ENCODE measurements at regions of chr7 and their contacts with region 1.

Region 1: GRCh38 chr7:116211006-116211912 is 920 bp downstream of the TES start:
- DNase-seq: peak; percentile 90
- H3K4me3 Mint-ChIP-seq: peak overlapping the region; percentile 95
- H3K27ac Mint-ChIP-seq: peak overlapping the region; percentile 98
- H3K4me1 Mint-ChIP-seq: peaks cover 19% of the 10 kb centered on the region
- H3K27me3 Mint-ChIP-seq: no peaks in the 10 kb centered on the region
- CTCF ChIP-seq: no peak

Region 2: DNA sequence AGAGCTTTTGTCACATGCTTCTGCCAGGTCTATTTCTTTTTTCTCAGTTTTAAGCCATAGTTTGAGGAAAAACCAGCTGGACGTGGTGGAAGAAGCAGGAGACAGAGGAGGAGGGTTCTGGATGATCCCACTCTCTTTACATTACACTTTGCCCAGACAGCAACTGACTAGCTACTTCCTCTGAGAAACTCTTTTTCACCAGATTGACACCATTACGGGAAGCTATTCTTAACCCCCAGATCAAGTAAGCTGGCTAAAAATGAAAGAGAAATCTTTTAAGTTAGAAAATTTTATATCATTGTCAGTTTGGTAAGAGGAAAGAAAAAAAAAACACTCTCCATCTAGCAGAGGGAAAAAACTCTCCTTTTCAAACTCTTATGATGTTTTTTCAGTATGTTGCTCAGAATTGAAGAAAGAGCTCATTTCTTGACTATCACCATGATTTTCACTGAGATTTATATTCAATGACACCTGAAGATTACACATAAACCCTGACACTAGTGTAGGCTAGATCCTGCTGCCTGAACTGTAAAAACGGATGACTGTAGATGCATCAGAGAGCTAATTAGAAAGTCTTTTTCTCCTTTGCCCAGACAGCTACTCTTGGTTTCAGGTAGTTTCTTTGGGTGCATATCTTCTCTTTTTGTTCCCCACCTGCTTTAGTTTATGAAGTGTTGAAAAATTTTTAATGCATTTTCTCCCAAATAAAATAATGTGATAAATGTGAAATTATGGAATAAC is 383.8 kb before region 1 on chr7:
- CTCF ChIA-PET with region 1: no interaction called
- POLR2A ChIA-PET with region 1: no interaction called
- intact Hi-C with region 1: no loop called
- DNase-seq: no peak
- H3K4me3 Mint-ChIP-seq: no peak overlapping the region
- H3K27ac Mint-ChIP-seq: no peak overlapping the region
- H3K4me1 Mint-ChIP-seq: no peaks in the 10 kb centered on the region
- H3K27me3 Mint-ChIP-seq: peaks cover 76% of the 10 kb centered on the region
- CTCF ChIP-seq: no peak

Region 3: GRCh38 chr7:116159711-116160110 is 51.5 kb before region 1 on chr7:
- CTCF ChIA-PET with region 1: no interaction called
- POLR2A ChIA-PET with region 1: no interaction called
- intact Hi-C with region 1: no loop called
- DNase-seq: no peak
- H3K4me3 Mint-ChIP-seq: no peak overlapping the region
- H3K27ac Mint-ChIP-seq: no peak overlapping the region
- H3K4me1 Mint-ChIP-seq: no peaks in the 10 kb centered on the region
- H3K27me3 Mint-ChIP-seq: peaks cover 44% of the 10 kb centered on the region
- CTCF ChIP-seq: no peak

Region 4: GRCh38 chr7:116180302-116180701 is 31.0 kb before region 1 on chr7:
- CTCF ChIA-PET with region 1: interaction called, 35 read pairs
- POLR2A ChIA-PET with region 1: interaction called, 92 read pairs
- intact Hi-C with region 1: loop called (anchors 1 kb)
- DNase-seq: peak; percentile 73
- H3K4me3 Mint-ChIP-seq: no peak overlapping the region
- H3K27ac Mint-ChIP-seq: no peak overlapping the region
- H3K4me1 Mint-ChIP-seq: peaks cover 16% of the 10 kb centered on the region
- H3K27me3 Mint-ChIP-seq: no peaks in the 10 kb centered on the region
- CTCF ChIP-seq: peak; percentile 80

Region 5: DNA sequence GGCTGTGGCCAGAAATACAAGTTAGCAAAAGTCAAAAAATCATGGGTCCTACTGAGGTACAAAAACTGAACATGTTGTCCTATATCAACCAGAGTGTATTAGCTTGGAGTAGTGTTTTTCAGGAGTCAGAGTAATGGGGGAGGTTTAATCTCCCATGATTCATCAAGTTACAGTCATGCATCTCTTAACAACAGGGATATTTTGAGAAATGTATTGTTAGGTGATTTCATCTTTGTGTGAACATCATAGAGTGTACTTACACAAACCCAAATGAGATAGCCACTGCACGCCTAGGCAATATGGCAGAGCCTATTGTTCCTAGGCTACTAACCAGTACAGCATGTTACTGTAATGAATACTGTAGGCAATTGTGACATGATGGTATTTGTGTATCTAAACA is 15.8 kb before region 1 on chr7:
- CTCF ChIA-PET with region 1: interaction called, 10 read pairs
- POLR2A ChIA-PET with region 1: interaction called, 69 read pairs
- intact Hi-C with region 1: no loop called
- DNase-seq: no peak
- H3K4me3 Mint-ChIP-seq: no peak overlapping the region
- H3K27ac Mint-ChIP-seq: no peak overlapping the region
- H3K4me1 Mint-ChIP-seq: peaks cover 6% of the 10 kb centered on the region
- H3K27me3 Mint-ChIP-seq: no peaks in the 10 kb centered on the region
- CTCF ChIP-seq: no peak

Region 6: DNA sequence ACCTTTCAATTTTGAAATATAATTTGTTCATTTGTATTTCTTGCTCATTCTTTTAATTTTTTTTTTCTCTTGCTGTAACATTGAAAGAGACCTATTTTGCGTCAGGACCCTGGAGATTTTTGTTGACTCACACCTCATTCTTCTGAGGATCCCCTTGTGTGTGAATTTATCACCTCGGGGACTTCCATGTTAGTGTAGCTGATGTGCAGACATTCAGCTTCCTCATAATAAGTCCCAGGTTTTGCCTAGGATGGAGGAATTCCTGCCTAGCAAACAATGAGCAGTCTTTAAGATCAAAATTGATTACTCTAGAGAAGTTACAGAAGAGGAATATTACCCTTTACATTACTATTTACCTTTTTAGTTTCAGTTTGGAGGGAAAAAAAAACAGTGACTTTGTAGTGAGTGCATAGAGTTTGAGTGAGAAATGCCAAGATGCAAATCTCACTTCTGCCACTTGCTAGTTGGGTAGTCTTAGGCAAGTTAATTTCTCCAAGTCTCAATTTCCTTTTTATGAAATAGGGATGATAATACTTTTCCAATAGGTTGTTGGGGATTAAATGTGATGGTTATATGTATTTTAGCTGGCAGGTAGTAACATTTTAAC is 13.3 kb after region 1 on chr7:
- CTCF ChIA-PET with region 1: interaction called, 9 read pairs
- POLR2A ChIA-PET with region 1: interaction called, 110 read pairs
- intact Hi-C with region 1: loop called (anchors 1 kb)
- DNase-seq: peak; percentile 29
- H3K4me3 Mint-ChIP-seq: peak overlapping the region; percentile 39
- H3K27ac Mint-ChIP-seq: peak overlapping the region; percentile 71
- H3K4me1 Mint-ChIP-seq: peaks cover 51% of the 10 kb centered on the region
- H3K27me3 Mint-ChIP-seq: no peaks in the 10 kb centered on the region
- CTCF ChIP-seq: no peak

Region 7: GRCh38 chr7:116242178-116242577 is 30.9 kb after region 1 on chr7:
- CTCF ChIA-PET with region 1: interaction called, 29 read pairs
- POLR2A ChIA-PET with region 1: interaction called, 25 read pairs
- intact Hi-C with region 1: no loop called
- DNase-seq: no peak
- H3K4me3 Mint-ChIP-seq: no peak overlapping the region
- H3K27ac Mint-ChIP-seq: no peak overlapping the region
- H3K4me1 Mint-ChIP-seq: peaks cover 23% of the 10 kb centered on the region
- H3K27me3 Mint-ChIP-seq: no peaks in the 10 kb centered on the region
- CTCF ChIP-seq: no peak

Region 8: DNA sequence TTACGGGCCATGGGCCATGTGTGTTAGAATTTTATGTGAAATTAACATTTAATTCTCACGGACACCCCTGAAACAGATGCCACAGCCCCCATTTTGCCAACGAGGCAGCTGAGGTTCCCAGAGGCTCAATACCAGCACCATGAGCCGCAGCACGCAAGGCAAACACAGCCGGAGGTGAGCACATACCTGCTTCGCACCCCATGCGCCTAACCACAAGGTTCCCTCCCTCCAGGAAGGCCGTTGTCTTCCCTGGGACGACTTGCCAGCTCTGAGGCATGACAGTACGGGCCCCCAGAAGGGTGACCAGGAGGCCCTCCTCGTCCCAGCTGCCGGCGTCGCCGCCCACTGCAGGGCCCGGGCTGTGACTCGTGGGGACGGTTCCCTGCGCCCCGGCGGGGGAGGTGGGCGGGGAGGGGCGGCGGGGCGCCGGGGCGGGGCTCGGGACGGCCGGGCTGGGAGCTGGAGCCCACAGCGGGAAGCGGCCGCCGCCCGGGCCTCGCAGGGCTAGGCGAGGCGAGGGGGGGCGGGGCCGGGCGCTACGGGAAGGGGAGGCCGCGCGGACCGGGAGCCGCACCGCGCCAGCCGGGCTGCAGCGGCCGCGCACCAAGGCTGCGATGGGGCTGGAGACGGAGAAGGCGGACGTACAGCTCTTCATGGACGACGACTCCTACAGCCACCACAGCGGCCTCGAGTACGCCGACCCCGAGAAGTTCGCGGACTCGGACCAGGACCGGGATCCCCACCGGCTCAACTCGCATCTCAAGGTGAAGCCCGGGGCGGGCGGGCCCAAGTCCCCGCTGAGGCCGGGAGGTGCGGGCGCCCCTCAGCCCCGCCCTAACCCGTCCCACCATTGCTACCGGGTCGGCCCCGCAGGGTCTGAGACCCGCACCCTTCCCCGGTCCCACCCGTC is 288.2 kb after region 1 on chr7 and contains the start of gene CAV2:
- CTCF ChIA-PET with region 1: interaction called, 3 read pairs
- POLR2A ChIA-PET with region 1: interaction called, 27 read pairs
- intact Hi-C with region 1: no loop called
- DNase-seq: peak; percentile 86
- H3K4me3 Mint-ChIP-seq: peak within 1 kb of the TSS; percentile 87
- H3K27ac Mint-ChIP-seq: peak within 1 kb of the TSS; percentile 90
- H3K4me1 Mint-ChIP-seq: peaks cover 32% of the 10 kb centered on the region
- H3K27me3 Mint-ChIP-seq: no peaks in the 10 kb centered on the region
- CTCF ChIP-seq: no peak
- total RNA-seq, gene CAV2: 155 and 171 TPM in 2 replicates

Region 9: GRCh38 chr7:116630932-116631745 is 419.9 kb after region 1 on chr7:
- CTCF ChIA-PET with region 1: no interaction called
- POLR2A ChIA-PET with region 1: interaction called, 15 read pairs
- intact Hi-C with region 1: no loop called
- DNase-seq: peak; percentile 97
- H3K4me3 Mint-ChIP-seq: peak overlapping the region; percentile 62
- H3K27ac Mint-ChIP-seq: peak overlapping the region; percentile 94
- H3K4me1 Mint-ChIP-seq: peaks cover 48% of the 10 kb centered on the region
- H3K27me3 Mint-ChIP-seq: no peaks in the 10 kb centered on the region
- CTCF ChIP-seq: no peak

Region 10: DNA sequence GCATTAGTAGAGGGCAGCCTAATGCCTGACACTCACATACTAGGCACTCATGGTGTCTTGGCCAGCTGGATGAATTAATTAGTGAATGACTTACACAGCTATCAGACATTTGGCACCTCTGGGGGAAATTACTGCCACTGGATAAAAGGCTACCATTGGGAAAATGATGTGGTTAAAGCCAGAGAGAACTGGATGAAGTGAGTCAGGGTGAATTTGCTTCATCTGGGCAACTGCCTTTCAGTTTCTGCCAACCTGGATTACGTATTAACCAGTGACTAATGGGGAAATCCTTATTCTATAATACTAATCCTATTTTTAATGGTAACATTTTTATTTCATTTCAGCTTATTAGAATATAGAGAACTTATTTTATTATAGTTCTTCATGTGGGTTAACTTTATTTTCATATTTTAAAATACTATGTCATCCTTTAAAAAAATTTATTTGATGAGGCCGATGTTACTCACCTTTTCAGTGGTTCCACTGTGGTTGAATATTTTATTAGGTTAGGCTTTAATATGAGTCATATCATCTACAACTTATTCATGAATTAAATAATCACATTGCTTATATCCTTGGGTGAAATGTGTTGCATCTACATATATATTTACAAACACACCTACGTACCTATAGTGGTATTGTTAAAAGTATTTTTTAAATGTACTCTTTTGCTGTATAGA is 565.5 kb after region 1 on chr7:
- CTCF ChIA-PET with region 1: no interaction called
- POLR2A ChIA-PET with region 1: no interaction called
- intact Hi-C with region 1: no loop called
- DNase-seq: peak; percentile 94
- H3K4me3 Mint-ChIP-seq: no peak overlapping the region
- H3K27ac Mint-ChIP-seq: peak overlapping the region; percentile 57
- H3K4me1 Mint-ChIP-seq: peaks cover 16% of the 10 kb centered on the region
- H3K27me3 Mint-ChIP-seq: no peaks in the 10 kb centered on the region
- CTCF ChIP-seq: no peak

Region 11: GRCh38 chr7:117047496-117047895 is 836.2 kb after region 1 on chr7:
- CTCF ChIA-PET with region 1: no interaction called
- POLR2A ChIA-PET with region 1: no interaction called
- intact Hi-C with region 1: no loop called
- DNase-seq: peak; percentile 7
- H3K4me3 Mint-ChIP-seq: no peak overlapping the region
- H3K27ac Mint-ChIP-seq: peak overlapping the region; percentile 36
- H3K4me1 Mint-ChIP-seq: peaks cover 8% of the 10 kb centered on the region
- H3K27me3 Mint-ChIP-seq: no peaks in the 10 kb centered on the region
- CTCF ChIP-seq: no peak

Measured in MCF 10A (cell line).